Transverse colon (tissue), 4 donors: ENCODE measurements at regions of chr6 and their contacts with region 1.

Region 1: GRCh38 chr6:148250975-148251685 is 91.5 kb upstream of the SASH1 start:
- DNase-seq: no peak
- H3K4me3 ChIP-seq: no peak overlapping the region
- H3K27ac ChIP-seq: no peak overlapping the region
- H3K4me1 ChIP-seq: no peaks in the 10 kb centered on the region
- H3K27me3 ChIP-seq: no peaks in the 10 kb centered on the region
- CTCF ChIP-seq: peak; percentile 19 to 38 (median 28)
- EP300 ChIP-seq: no peak
- POLR2A ChIP-seq: no peak

Region 2: DNA sequence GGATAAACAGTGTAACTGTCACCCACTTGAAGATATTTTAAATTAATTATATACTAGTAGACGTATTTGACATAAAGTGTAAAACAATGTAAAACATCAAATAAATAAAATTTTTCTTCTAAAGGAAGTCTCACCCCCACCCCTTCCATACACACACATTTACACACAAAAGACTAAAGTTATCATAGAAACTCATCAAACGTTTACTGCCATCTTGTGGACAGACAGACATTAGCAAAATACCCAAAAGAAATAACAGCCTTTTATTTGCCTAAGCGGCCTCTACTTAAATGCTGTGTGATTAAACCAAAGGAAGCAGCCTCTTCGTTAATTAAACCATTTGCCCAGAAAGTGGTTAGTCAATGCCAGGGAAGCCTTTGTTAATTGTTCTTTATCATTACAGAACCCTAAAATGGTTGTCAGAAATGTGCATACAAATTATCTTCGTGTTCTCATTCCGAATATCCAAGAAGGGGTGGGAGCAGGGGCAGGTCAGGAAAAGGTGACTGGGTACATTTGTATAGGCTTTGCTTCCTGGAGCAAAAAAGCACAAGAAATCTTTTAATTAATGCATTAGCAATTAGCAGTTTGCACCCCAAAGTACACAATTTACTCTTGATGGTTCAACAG is 84.7 kb before region 1 on chr6:
- in situ Hi-C with region 1: no loop called
- intact Hi-C with region 1: loop called (anchors 5 kb)
- DNase-seq: no peak
- H3K4me3 ChIP-seq: no peak overlapping the region
- H3K27ac ChIP-seq: no peak overlapping the region
- H3K4me1 ChIP-seq: no peaks in the 10 kb centered on the region
- H3K27me3 ChIP-seq: no peaks in the 10 kb centered on the region
- CTCF ChIP-seq: peak; percentile 63 to 70 (median 68)
- EP300 ChIP-seq: no peak
- POLR2A ChIP-seq: no peak

Region 3: GRCh38 chr6:148192310-148192709 is 58.8 kb before region 1 on chr6:
- in situ Hi-C with region 1: no loop called
- intact Hi-C with region 1: no loop called
- DNase-seq: no peak
- H3K4me3 ChIP-seq: no peak overlapping the region
- H3K27ac ChIP-seq: peak overlapping the region; percentile 53 to 69 (median 60)
- H3K4me1 ChIP-seq: peaks cover 0 to 24% (median 15%) of the 10 kb centered on the region in 4 donors
- H3K27me3 ChIP-seq: no peaks in the 10 kb centered on the region
- CTCF ChIP-seq: no peak
- EP300 ChIP-seq: no peak
- POLR2A ChIP-seq: no peak